ENCODE measurements at regions of chr6 and their contacts with region 1.

Region 1: GRCh38 chr6:41367700-41368099 is 32.3 kb downstream of the NCR2 start:
- DNase-seq: peak; percentile 62
- H3K4me3 Mint-ChIP-seq: no peak overlapping the region
- H3K27ac Mint-ChIP-seq: no peak overlapping the region
- H3K4me1 Mint-ChIP-seq: no peaks in the 10 kb centered on the region
- H3K27me3 Mint-ChIP-seq: peaks cover 62% of the 10 kb centered on the region
- CTCF ChIP-seq: peak; percentile 74

Region 2: GRCh38 chr6:41392246-41392645 is 24.5 kb after region 1 on chr6:
- CTCF ChIA-PET with region 1: interaction called, 32 read pairs
- POLR2A ChIA-PET with region 1: no interaction called
- intact Hi-C with region 1: no loop called
- DNase-seq: no peak
- H3K4me3 Mint-ChIP-seq: no peak overlapping the region
- H3K27ac Mint-ChIP-seq: no peak overlapping the region
- H3K4me1 Mint-ChIP-seq: no peaks in the 10 kb centered on the region
- H3K27me3 Mint-ChIP-seq: peaks cover 19% of the 10 kb centered on the region
- CTCF ChIP-seq: no peak

Region 3: GRCh38 chr6:41463062-41463930 is 95.6 kb after region 1 on chr6:
- CTCF ChIA-PET with region 1: interaction called, 5 read pairs
- POLR2A ChIA-PET with region 1: no interaction called
- intact Hi-C with region 1: loop called (anchors 5 kb)
- DNase-seq: peak; percentile 68
- H3K4me3 Mint-ChIP-seq: no peak overlapping the region
- H3K27ac Mint-ChIP-seq: no peak overlapping the region
- H3K4me1 Mint-ChIP-seq: no peaks in the 10 kb centered on the region
- H3K27me3 Mint-ChIP-seq: peaks cover 37% of the 10 kb centered on the region
- CTCF ChIP-seq: peak; percentile 43

Region 4: GRCh38 chr6:41591859-41592502 is 224.3 kb after region 1 on chr6:
- CTCF ChIA-PET with region 1: interaction called, 35 read pairs
- POLR2A ChIA-PET with region 1: no interaction called
- intact Hi-C with region 1: loop called (anchors 1 kb)
- DNase-seq: peak; percentile 76
- H3K4me3 Mint-ChIP-seq: no peak overlapping the region
- H3K27ac Mint-ChIP-seq: no peak overlapping the region
- H3K4me1 Mint-ChIP-seq: no peaks in the 10 kb centered on the region
- H3K27me3 Mint-ChIP-seq: no peaks in the 10 kb centered on the region
- CTCF ChIP-seq: peak; percentile 94

Region 5: GRCh38 chr6:41602864-41603608 is 235.3 kb after region 1 on chr6:
- CTCF ChIA-PET with region 1: interaction called, 18 read pairs
- POLR2A ChIA-PET with region 1: interaction called, 3 read pairs
- intact Hi-C with region 1: loop called (anchors 1 kb)
- DNase-seq: peak; percentile 87
- H3K4me3 Mint-ChIP-seq: no peak overlapping the region
- H3K27ac Mint-ChIP-seq: no peak overlapping the region
- H3K4me1 Mint-ChIP-seq: peaks cover 5% of the 10 kb centered on the region
- H3K27me3 Mint-ChIP-seq: no peaks in the 10 kb centered on the region
- CTCF ChIP-seq: peak; percentile 90

Region 6: GRCh38 chr6:41779793-41780545 is 412.3 kb after region 1 on chr6 and contains the start of gene FRS3:
- CTCF ChIA-PET with region 1: interaction called, 9 read pairs
- POLR2A ChIA-PET with region 1: no interaction called
- intact Hi-C with region 1: loop called (anchors 1 kb)
- DNase-seq: peak; percentile 90
- H3K4me3 Mint-ChIP-seq: peak within 1 kb of the TSS; percentile 90
- H3K27ac Mint-ChIP-seq: no peak within 1 kb of the TSS
- H3K4me1 Mint-ChIP-seq: peaks cover 23% of the 10 kb centered on the region
- H3K27me3 Mint-ChIP-seq: no peaks in the 10 kb centered on the region
- CTCF ChIP-seq: peak; percentile 94
- total RNA-seq, gene FRS3: 3.9 and 5.3 TPM in 2 replicates

Measured in MCF 10A (cell line).